Adrenal gland (tissue), 19 donors: ENCODE measurements at regions of chr10 and their contacts with region 1.

Region 1: GRCh38 chr10:94443047-94443446 is 40.7 kb downstream of the TBC1D12 start:
- DNase-seq: no peak
- H3K4me3 ChIP-seq: no peak overlapping the region
- H3K27ac ChIP-seq: no peak overlapping the region
- H3K4me1 ChIP-seq: peaks cover 0 to 15% of the 10 kb centered on the region in 2 donors
- H3K27me3 ChIP-seq: no peaks in the 10 kb centered on the region
- CTCF ChIP-seq: no peak
- POLR2A ChIP-seq: no peak

Region 2: DNA sequence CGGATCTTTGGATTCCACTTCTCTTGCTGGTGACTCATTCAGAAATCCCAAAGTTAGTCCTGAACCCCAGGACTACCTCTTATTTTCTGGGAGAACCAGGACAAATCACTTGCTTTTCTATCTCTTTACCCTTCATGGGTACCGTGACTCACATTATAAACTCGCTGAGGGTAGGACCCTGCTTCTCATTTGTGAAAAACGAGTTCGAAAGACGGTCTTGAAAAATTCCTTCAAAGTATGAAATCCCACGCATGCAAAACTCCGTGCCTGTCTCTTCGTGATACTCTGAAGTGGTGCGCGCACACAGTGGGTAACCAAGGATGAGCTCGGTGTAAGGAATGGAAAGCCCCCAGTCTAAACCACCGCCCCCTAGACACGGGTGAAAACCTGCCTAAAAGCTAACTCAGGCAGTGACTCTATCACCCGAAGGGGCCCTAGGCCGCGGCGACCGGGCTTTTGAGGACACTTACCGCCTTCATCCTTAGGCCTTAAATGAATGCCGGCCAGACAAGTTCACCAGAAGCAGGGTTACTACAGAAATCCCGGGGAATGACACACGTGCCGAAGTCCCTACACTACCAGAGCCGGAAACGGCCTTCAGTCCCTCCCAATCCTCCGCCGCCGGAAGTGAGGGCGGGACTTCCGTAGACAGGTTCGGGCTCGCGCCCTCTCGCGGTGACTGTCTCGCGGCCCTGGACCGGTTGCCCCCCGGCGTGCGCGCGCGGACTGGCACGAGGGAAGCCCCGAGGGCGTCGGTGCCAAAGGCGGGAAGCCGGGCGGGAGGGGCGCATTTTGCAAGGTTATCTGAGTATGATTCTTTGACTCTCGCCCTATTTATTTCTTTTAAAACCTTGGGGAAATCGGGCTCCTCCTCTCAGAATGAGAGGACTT is 80.4 kb before region 1 on chr10 and contains the start of gene NOC3L:
- intact Hi-C with region 1: loop called in 1 of 2 experiments (anchors 10 kb)
- DNase-seq: peak; percentile 95 to 97 (median 96)
- H3K4me3 ChIP-seq: peak within 1 kb of the TSS; percentile 1 to 87 (median 40)
- H3K27ac ChIP-seq: peak within 1 kb of the TSS in 4 of 5 donors; percentile 54 to 89 (median 76)
- H3K4me1 ChIP-seq: peaks cover 15 to 25% of the 10 kb centered on the region in 2 donors
- H3K27me3 ChIP-seq: no peaks in the 10 kb centered on the region
- CTCF ChIP-seq: peak; percentile 59 to 88 (median 77)
- POLR2A ChIP-seq: peak in 1 of 2 donors; percentile 65
- total RNA-seq, gene NOC3L: 7.4 to 30.2 (median 18.9) TPM